ENCODE measurements at regions of chr5 and their contacts with region 1.

Region 1: GRCh38 chr5:171907725-171908343 is 98.6 kb downstream of the FBXW11 start:
- DNase-seq: no peak
- ATAC-seq: peak; percentile 87

Region 2: GRCh38 chr5:171630027-171630669 is 277.7 kb before region 1 on chr5:
- intact Hi-C with region 1: loop called (anchors 5 kb)
- DNase-seq: peak; percentile 76
- ATAC-seq: peak; percentile 92

Region 3: DNA sequence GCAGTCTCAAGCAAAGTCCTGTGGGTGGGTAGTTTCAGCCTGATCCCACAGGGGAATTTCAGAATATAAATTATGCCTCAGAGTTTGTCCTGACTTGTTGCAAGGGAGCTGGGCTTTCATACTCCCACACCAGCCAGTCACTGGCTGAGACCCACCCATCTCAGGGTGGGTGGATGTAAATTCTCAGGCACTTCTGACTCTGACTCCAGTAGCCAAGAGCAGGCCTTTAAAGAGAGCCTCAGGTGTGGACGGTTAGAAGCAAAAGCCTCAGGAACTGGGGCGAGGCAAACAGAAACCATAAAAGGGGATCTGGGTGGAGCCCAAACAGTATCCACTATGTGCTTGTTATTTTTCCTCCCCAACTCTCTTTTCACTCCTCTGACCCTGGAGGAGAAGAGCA is 127.2 kb after region 1 on chr5:
- intact Hi-C with region 1: loop called (anchors 1 kb)
- DNase-seq: no peak
- ATAC-seq: no peak

Measured in Right ventricle myocardium inferior (tissue), 1 donor.